Prostate gland (tissue), 2 donors: ENCODE measurements at regions of chr1 and their contacts with region 1.

Region 1: GRCh38 chr1:12407050-12407961 is 177.5 kb downstream of the VPS13D start:
- DNase-seq: peak; percentile 71
- H3K4me3 ChIP-seq: no peak overlapping the region
- H3K27ac ChIP-seq: peak overlapping the region; percentile 63 to 74
- H3K4me1 ChIP-seq: peaks cover 12% of the 10 kb centered on the region
- H3K27me3 ChIP-seq: no peaks in the 10 kb centered on the region
- CTCF ChIP-seq: peak in 3 of 4 experiments; percentile 58 to 76 (median 72)
- POLR2A ChIP-seq: no peak

Region 2: GRCh38 chr1:12314333-12314903 is 92.9 kb before region 1 on chr1:
- intact Hi-C with region 1: loop called (anchors 5 kb)
- DNase-seq: no peak
- H3K4me3 ChIP-seq: no peak overlapping the region
- H3K27ac ChIP-seq: no peak overlapping the region
- H3K4me1 ChIP-seq: peaks cover 10% of the 10 kb centered on the region
- H3K27me3 ChIP-seq: no peaks in the 10 kb centered on the region
- CTCF ChIP-seq: peak in 3 of 4 experiments; percentile 28 to 66 (median 63)
- POLR2A ChIP-seq: no peak

Region 3: GRCh38 chr1:12448746-12449177 is 41.5 kb after region 1 on chr1:
- intact Hi-C with region 1: loop called (anchors 5 kb)
- DNase-seq: no peak
- H3K4me3 ChIP-seq: no peak overlapping the region
- H3K27ac ChIP-seq: peak overlapping the region; percentile 78 to 81
- H3K4me1 ChIP-seq: peaks cover 47% of the 10 kb centered on the region
- H3K27me3 ChIP-seq: no peaks in the 10 kb centered on the region
- CTCF ChIP-seq: no peak
- POLR2A ChIP-seq: no peak

Region 4: GRCh38 chr1:12604114-12604874 is 197.0 kb after region 1 on chr1:
- intact Hi-C with region 1: loop called (anchors 5 kb)
- DNase-seq: no peak
- H3K4me3 ChIP-seq: no peak overlapping the region
- H3K27ac ChIP-seq: peak overlapping the region; percentile 0 to 90
- H3K4me1 ChIP-seq: peaks cover 37% of the 10 kb centered on the region
- H3K27me3 ChIP-seq: no peaks in the 10 kb centered on the region
- CTCF ChIP-seq: no peak
- POLR2A ChIP-seq: no peak